Breast epithelium (tissue), 4 donors: ENCODE measurements at regions of chr12 and their contacts with region 1.

Region 1: DNA sequence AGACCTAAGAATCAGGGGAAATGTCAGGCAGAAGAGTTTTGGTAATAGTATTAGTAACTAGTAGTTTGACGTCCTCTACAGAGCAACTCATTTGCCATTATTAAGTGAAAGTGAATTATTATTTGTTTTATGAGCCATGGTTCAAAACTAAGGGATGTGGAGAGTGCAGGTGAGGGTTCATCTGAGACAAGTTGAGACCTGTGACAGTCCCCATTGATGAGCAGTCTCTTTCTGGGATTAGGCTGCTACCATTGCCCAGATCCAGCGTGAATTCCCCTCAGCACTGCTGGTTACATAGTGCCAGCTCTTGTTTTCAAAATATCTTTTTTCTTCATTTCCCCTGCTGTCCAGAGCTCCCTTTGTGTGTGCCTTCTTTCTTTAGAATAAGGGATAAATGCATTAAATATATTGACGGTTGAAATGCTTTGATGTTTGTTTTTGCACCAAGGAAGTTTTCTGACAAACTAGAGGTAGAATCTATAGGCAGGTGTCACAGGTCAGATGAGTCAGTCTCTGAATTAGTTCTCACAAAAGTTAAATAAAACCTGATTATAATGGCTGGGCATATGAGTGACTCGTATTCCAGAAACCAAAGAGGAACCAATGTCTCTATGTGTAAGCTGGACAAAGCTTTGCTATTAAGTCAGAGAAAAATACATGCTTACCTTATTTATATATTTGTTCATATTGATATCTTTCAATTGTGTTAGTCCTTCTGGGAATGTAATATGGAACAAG is 381.4 kb downstream of the TMEM117 start:
- DNase-seq: no peak
- H3K4me3 ChIP-seq: no peak overlapping the region
- H3K27ac ChIP-seq: no peak overlapping the region
- H3K4me1 ChIP-seq: no peaks in the 10 kb centered on the region
- H3K27me3 ChIP-seq: no peaks in the 10 kb centered on the region
- CTCF ChIP-seq: no peak
- POLR2A ChIP-seq: no peak

Region 2: DNA sequence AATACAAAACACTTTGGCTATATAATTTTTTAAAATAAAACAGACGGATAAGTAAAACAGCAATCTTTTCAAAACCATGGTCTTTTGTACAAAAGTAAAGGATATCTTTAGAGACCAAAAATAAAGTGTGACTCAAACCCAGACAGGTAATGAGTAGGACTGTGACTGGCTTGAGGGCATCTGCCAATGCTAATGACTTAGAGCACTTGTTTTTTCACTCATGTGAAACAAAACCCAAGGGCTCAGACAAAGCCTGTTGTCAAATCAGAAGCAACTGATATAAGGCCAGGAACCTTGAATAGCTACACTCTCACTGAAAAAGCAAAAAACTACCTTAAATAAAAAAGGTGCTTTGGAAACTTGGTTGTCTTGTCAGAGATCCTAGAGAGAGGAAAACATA is 24.0 kb before region 1 on chr12:
- intact Hi-C with region 1: no loop called
- DNase-seq: no peak
- H3K4me3 ChIP-seq: no peak overlapping the region
- H3K27ac ChIP-seq: no peak overlapping the region
- H3K4me1 ChIP-seq: no peaks in the 10 kb centered on the region
- H3K27me3 ChIP-seq: no peaks in the 10 kb centered on the region
- CTCF ChIP-seq: no peak
- POLR2A ChIP-seq: no peak

Region 3: DNA sequence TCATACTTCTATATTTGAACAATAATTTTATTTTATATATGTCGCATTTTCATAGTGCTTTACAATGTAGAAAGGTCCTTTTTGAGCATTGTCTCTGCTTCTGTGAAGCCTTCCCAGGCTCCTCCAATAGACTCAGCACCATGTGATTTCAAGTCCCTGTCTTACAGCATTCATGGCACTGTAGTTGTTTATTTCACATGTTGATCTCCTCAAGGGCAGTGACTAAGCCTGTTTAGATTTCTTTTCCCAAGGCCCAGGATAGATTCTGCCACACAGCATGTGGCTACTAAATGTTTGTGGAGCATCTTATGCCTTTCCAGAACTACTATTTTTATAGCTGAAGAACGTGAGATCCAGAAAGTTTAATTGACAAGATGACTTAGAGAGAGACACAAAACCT is 10.3 kb after region 1 on chr12:
- intact Hi-C with region 1: no loop called
- DNase-seq: no peak
- H3K4me3 ChIP-seq: no peak overlapping the region
- H3K27ac ChIP-seq: no peak overlapping the region
- H3K4me1 ChIP-seq: no peaks in the 10 kb centered on the region
- H3K27me3 ChIP-seq: no peaks in the 10 kb centered on the region
- CTCF ChIP-seq: no peak
- POLR2A ChIP-seq: no peak

Region 4: GRCh38 chr12:44750461-44750860 is 533.1 kb after region 1 on chr12:
- intact Hi-C with region 1: loop called (anchors 5 kb)
- DNase-seq: no peak
- H3K4me3 ChIP-seq: no peak overlapping the region
- H3K27ac ChIP-seq: no peak overlapping the region
- H3K4me1 ChIP-seq: no peaks in the 10 kb centered on the region
- H3K27me3 ChIP-seq: no peaks in the 10 kb centered on the region
- CTCF ChIP-seq: no peak
- POLR2A ChIP-seq: no peak

Region 5: GRCh38 chr12:45148006-45148405 is 930.7 kb after region 1 on chr12:
- intact Hi-C with region 1: no loop called
- DNase-seq: no peak
- H3K4me3 ChIP-seq: no peak overlapping the region
- H3K27ac ChIP-seq: no peak overlapping the region
- H3K4me1 ChIP-seq: no peaks in the 10 kb centered on the region
- H3K27me3 ChIP-seq: no peaks in the 10 kb centered on the region
- CTCF ChIP-seq: no peak
- POLR2A ChIP-seq: no peak

Region 6: DNA sequence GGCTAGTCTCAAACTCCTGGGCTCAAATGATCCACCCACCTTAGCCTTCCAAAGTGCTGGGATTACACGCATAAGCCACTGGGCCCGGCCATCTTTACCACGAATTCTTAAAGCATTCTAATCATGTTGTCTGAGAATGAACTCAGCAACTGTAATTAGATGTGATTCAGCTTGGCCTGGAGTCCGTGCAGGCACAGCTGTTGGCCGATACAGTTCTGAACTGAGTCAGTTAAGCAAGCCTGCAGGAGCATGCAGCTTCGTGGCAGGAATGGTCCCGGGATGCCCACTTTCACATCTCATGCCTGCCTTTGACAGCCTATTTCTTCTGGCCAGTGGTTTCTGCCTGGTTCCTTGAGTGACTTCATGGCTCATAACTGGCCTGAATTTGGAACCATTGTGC is 1192.7 kb after region 1 on chr12:
- intact Hi-C with region 1: no loop called
- DNase-seq: no peak
- H3K4me3 ChIP-seq: no peak overlapping the region
- H3K27ac ChIP-seq: no peak overlapping the region
- H3K4me1 ChIP-seq: no peaks in the 10 kb centered on the region
- H3K27me3 ChIP-seq: no peaks in the 10 kb centered on the region
- CTCF ChIP-seq: no peak
- POLR2A ChIP-seq: no peak